H1 (cell line): ENCODE measurements at regions of chr1 and their contacts with region 1.

Region 1: DNA sequence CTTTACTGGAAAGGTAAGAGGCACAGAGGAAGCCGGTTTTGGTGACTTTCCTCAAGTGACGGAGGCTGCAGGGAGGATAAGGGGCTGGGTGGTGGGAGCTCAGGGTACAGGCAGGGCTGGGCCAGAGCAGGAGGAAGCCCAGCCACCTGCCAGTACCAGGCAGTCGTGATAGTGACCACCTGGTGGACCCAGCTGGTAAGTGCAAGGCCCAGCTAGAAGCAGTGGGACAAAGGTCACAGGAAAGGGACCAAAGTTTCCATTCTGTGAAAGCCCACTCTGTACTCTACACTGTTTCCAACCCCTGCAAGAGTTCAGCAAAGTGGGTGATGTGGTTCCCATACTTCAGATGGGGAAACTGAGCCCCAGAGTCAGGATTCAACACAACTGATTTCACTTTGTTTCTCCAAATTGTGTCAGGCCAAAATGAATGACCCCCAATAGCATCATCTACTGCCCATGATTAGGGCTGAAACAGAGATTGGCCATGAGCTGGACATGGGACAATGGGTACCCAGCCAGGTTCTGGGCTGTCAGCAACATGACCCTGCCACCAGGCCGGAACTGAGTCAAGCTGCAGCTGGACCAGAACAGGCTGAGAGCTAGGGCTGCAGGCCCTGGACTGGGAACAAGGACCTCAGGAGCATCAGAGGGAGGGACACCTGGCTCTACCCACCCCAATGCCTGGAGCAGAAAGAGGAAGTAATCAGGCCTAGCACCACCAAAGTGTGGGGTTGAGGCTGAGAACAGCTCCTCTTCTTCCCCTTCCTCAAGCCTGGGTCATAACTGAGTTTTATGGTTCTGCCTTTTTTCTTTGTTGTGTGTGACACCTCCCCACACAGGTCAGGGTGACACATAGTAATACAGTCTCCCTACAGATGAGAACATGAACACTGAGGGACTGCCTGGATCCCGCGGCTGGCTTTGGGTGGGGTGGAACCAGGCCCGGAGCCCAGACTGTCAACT is 50.2 kb downstream of the KCNN3 start:
- DNase-seq: peak in 1 of 2 experiments; percentile 65
- H3K4me3 ChIP-seq: no peak overlapping the region
- H3K27ac ChIP-seq: no peak overlapping the region
- H3K4me1 ChIP-seq: peaks cover 0 to 2% (median 1%) of the 10 kb centered on the region in 4 experiments; a peak in 3 of 7 replicates
- H3K27me3 ChIP-seq: no peaks in the 10 kb centered on the region
- CTCF ChIP-seq: peak; percentile 67 to 82 (median 76)
- EP300 ChIP-seq: no peak
- POLR2A ChIP-seq: no peak
- RAD21 ChIP-seq: peak; percentile 59 to 72

Region 2: GRCh38 chr1:154772606-154773506 is 47.1 kb before region 1 on chr1:
- CTCF ChIA-PET with region 1: interaction called, 13 read pairs
- POLR2A ChIA-PET with region 1: no interaction called
- DNase-seq: peak; percentile 17 to 69
- H3K4me3 ChIP-seq: no peak overlapping the region
- H3K27ac ChIP-seq: no peak overlapping the region
- H3K4me1 ChIP-seq: peaks cover 0 to 11% (median 8%) of the 10 kb centered on the region in 4 experiments; a peak in 6 of 7 replicates
- H3K27me3 ChIP-seq: no peaks in the 10 kb centered on the region
- CTCF ChIP-seq: peak; percentile 55 to 65 (median 60)
- EP300 ChIP-seq: no peak
- POLR2A ChIP-seq: no peak
- RAD21 ChIP-seq: peak; percentile 76 to 82

Region 3: DNA sequence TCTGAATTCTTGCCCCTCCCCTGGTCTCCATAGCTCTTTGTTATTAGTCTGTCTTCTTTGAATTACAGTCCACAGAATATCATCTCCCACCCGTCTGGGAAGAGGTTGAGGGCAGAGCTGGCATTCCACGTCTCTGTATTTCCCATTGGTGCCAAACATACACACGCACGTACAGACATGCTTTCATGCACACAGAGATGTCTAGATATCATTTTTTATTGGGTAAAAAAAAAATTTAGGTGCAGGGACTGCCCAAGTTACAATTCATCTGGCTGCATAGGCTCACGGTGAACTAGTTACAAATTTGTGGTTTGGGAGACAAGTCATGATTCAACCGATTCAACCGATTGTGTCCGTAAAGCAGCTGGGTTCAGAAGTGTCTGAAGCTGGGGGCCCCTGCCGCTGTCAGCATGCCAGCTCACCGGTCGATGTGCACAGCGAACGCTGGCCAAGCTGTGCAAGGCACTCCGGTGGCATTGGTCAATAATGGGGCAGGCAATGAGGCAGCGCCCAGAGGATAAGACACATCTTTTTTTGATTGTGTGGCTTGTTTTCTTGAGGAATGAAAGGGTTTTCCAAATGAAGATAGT is 23.5 kb before region 1 on chr1:
- CTCF ChIA-PET with region 1: interaction called, 29 read pairs
- POLR2A ChIA-PET with region 1: no interaction called
- DNase-seq: no peak
- H3K4me3 ChIP-seq: no peak overlapping the region
- H3K27ac ChIP-seq: no peak overlapping the region
- H3K4me1 ChIP-seq: no peaks in the 10 kb centered on the region
- H3K27me3 ChIP-seq: no peaks in the 10 kb centered on the region; a peak in 2 of 7 replicates
- CTCF ChIP-seq: no peak
- EP300 ChIP-seq: no peak
- POLR2A ChIP-seq: no peak
- RAD21 ChIP-seq: no peak

Region 4: DNA sequence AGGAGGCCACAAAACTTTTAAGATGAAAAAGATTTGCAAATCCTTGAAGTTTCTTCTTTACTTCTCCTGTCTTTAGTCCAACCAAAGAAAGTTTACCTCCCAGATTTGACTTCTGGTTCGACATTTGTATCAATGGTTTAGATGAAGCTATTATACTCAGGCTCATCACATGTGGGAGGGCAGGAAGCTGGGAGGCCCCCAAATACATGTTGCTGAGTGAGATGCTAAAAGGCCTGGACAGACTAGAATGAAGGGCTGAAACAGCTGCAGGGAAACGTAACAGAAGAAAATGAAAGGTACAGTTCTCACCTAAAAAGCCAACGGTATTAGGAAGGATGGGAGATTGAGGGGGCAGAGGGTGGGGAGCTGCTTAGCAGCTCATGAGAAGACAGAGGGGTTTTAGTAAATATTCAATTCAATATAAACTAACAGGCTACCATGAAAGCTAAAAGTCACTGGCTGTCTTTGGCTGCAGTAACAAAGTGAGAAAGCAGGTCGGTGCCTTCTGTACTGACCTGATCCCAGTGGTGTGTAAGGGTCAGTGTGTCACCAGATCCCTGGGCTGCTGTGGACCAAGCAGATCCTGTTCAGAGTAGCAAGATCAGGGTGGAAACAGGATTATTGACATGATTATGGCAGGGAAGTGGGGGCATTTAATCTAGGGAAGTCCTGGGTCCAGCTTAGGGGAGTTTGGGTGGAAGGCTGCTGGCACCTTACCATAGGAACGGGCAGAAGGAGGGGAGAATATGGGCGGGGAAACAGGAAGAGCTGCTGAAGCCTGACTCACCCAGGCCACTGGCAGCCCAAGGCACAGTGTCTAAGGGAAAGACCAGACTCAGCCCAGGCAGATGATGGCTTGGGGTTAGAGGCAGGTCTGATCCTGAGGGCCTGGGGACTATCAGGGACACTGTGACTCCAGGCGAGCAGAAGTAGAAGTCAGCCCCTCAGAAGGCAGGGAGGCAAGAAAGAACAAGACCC is 10.2 kb before region 1 on chr1:
- CTCF ChIA-PET with region 1: interaction called, 23 read pairs
- POLR2A ChIA-PET with region 1: interaction called, 3 read pairs
- DNase-seq: no peak
- H3K4me3 ChIP-seq: no peak overlapping the region
- H3K27ac ChIP-seq: no peak overlapping the region
- H3K4me1 ChIP-seq: peaks cover 0 to 20% (median 15%) of the 10 kb centered on the region in 4 experiments; a peak in 5 of 7 replicates
- H3K27me3 ChIP-seq: 0 out of 7 replicates have a peak, but pooled peaks cover 0 to 2% (median 0%) of the 10 kb centered on the region in 4 experiments
- CTCF ChIP-seq: no peak
- EP300 ChIP-seq: no peak
- POLR2A ChIP-seq: no peak
- RAD21 ChIP-seq: no peak

Region 5: DNA sequence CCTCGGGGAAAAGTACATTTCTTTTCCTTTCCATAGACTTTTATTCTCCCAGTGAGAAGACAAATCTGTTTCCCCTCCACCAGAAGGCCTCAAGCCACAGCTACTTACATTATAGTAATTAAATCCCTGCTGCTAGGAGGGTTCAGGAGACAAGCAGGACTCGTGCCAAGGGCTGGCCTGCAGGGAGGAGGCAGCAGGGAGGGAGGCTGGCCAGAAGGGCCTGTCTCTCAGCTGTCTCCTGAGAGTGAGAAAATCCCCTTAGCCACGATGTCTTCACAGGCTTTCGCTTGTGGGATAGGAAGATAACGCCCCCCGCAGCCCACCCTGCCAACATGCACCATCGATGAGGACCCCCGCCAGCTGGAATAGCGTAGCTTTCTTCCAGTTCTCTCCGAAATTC is 36.1 kb after region 1 on chr1:
- CTCF ChIA-PET with region 1: interaction called, 11 read pairs
- POLR2A ChIA-PET with region 1: no interaction called
- DNase-seq: no peak
- H3K4me3 ChIP-seq: no peak overlapping the region
- H3K27ac ChIP-seq: no peak overlapping the region
- H3K4me1 ChIP-seq: no peaks in the 10 kb centered on the region
- H3K27me3 ChIP-seq: no peaks in the 10 kb centered on the region
- CTCF ChIP-seq: peak; percentile 33 to 40 (median 36); a peak in 3 of 4 replicates
- EP300 ChIP-seq: no peak
- POLR2A ChIP-seq: no peak
- RAD21 ChIP-seq: peak; percentile 59 to 63

Region 6: DNA sequence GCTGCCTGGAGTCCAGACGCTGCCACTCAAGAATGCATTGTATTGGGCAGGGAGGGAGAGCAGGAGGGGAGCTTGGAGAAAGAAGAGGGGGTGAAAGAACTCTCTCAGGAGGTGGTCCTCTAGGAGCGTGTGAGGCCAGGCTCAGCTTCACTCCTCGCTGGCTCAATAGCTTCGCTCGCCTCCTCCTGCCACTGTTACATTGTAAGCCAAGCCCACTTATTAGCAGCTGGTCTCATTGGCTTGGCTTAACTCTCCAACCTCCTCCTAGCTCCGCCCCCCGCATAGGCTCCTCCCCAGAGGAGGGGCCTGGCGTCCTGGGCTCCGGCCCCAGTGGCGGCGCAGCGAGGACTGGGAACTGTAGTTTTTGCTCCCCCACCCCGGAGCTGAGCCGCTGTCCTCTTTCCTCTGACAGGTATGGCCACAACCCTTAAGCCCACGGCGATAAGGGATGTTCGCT is 50.2 kb after region 1 on chr1 and contains the start of gene KCNN3:
- CTCF ChIA-PET with region 1: interaction called, 10 read pairs
- POLR2A ChIA-PET with region 1: interaction called, 4 read pairs
- DNase-seq: peak; percentile 84 to 99
- H3K4me3 ChIP-seq: peak within 1 kb of the TSS; percentile 10 to 58 (median 38); a peak in 7 of 8 replicates
- H3K27ac ChIP-seq: no peak within 1 kb of the TSS
- H3K4me1 ChIP-seq: peaks cover 13 to 51% (median 21%) of the 10 kb centered on the region in 4 experiments; a peak in 6 of 7 replicates
- H3K27me3 ChIP-seq: peaks cover 0 to 10% (median 7%) of the 10 kb centered on the region in 4 experiments; a peak in 3 of 7 replicates
- CTCF ChIP-seq: no peak
- EP300 ChIP-seq: no peak
- POLR2A ChIP-seq: peak in 1 of 2 experiments; percentile 79; a peak in 2 of 3 replicates
- RAD21 ChIP-seq: no peak
- total RNA-seq, gene KCNN3: 2.8 and 3.0 TPM in 2 replicates

Region 7: DNA sequence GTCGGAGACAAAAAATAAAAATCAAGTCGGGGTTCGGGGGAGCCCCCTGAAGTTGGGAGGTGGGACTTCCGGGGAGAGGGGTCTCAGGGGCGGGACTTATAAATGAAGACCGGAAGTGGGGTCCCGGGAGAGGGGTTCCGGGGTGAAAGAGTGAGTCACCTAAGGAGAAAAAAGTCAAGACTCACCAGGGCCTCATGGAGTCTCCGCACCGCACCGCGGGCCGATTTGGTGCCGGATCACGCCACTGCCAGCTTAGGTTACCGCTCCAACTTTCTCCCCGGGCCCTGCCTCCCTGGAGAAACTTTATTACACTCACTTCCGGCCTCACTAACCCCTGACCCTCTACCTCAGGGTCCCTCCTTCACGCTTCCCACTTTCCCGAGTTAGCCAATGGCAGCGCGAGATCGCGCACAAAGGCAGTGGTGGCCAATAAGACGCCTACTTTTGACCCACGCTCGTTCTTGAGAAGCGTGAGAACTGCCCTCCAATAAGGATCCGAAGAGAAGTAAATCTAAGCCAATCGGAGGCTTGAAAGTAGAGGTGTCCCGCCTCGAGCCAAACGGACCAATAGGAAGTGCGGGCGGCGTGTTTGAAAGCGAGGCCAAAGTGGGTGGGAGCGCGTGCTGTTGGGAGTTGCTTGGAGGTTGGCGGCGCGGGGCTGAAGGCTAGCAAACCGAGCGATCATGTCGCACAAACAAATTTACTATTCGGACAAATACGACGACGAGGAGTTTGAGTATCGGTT is 154.3 kb after region 1 on chr1 and contains the start of gene CKS1B:
- CTCF ChIA-PET with region 1: no interaction called
- POLR2A ChIA-PET with region 1: no interaction called
- DNase-seq: peak; percentile 91 to 98
- H3K4me3 ChIP-seq: peak within 1 kb of the TSS; percentile 87 to 99 (median 96)
- H3K27ac ChIP-seq: peak within 1 kb of the TSS; percentile 95
- H3K4me1 ChIP-seq: peaks cover 3 to 13% (median 11%) of the 10 kb centered on the region in 4 experiments; a peak in 6 of 7 replicates
- H3K27me3 ChIP-seq: no peaks in the 10 kb centered on the region
- CTCF ChIP-seq: no peak
- EP300 ChIP-seq: no peak
- POLR2A ChIP-seq: peak; percentile 46 to 82
- RAD21 ChIP-seq: no peak
- total RNA-seq, gene CKS1B: 284 and 294 TPM in 2 replicates